ENCODE measurements at regions of chr22 and their contacts with region 1.

Region 1: GRCh38 chr22:23838681-23839468 is at the start of gene DERL3:
- DNase-seq: peak; percentile 98
- H3K4me3 Mint-ChIP-seq: peak within 1 kb of the TSS; percentile 88
- H3K27ac Mint-ChIP-seq: peak within 1 kb of the TSS; percentile 70
- H3K4me1 Mint-ChIP-seq: peaks cover 19% of the 10 kb centered on the region
- H3K27me3 Mint-ChIP-seq: peaks cover 2% of the 10 kb centered on the region
- total RNA-seq, gene DERL3: 8.1 to 9.7 TPM

Region 2: DNA sequence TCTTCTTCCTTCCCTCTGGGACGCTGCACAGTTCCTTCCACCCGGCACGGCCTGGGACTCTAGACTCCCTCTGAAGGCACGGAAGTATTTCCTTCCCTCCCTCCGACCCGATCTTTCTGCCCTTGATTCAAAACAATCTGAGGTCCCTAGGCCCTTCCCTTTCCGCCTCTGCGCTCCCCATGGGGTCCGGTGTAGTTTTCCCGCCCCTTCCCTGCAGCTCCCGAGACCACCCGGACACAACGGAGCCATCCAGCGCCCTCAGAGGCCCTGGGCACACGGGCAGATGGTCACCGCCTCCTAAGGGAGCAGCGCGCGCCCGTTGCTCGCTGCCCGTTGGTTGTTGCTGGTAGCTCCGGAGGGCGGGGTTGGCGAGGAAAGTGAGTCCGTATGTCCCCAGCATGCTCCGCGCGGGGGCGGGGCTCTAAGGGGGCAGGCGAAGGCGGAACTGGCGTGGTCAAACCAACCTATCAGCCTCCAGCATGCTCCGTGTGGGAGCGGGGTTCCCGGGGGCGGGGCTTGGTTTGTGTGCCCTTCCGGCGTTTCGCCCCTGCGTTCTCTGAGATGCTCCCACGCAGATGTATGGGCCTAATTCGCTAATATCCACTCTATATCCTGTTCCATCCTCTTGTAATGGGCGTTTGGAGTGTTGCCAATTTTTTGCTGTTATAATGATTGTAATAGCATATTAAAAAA is 74.9 kb after region 1 on chr22:
- CTCF ChIA-PET with region 1: no interaction called
- POLR2A ChIA-PET with region 1: no interaction called
- intact Hi-C with region 1: loop called (anchors 1 kb)
- DNase-seq: peak; percentile 100
- H3K4me3 Mint-ChIP-seq: peak overlapping the region; percentile 92
- H3K27ac Mint-ChIP-seq: peak overlapping the region; percentile 97
- H3K4me1 Mint-ChIP-seq: peaks cover 15% of the 10 kb centered on the region
- H3K27me3 Mint-ChIP-seq: no peaks in the 10 kb centered on the region

Measured in activated CD4-positive, alpha-beta memory T cell treated with anti-CD3 and anti-CD28 coated beads for 36 hours (primary cell).